ENCODE measurements at regions of chr4 and their contacts with region 1.

Region 1: GRCh38 chr4:6951880-6952419 is 42.3 kb downstream of the TBC1D14 start:
- DNase-seq: peak in 1 of 5 donors; percentile 21
- H3K4me3 ChIP-seq: no peak overlapping the region
- H3K27ac ChIP-seq: no peak overlapping the region
- H3K4me1 ChIP-seq: peaks cover 3% of the 10 kb centered on the region
- H3K27me3 ChIP-seq: no peaks in the 10 kb centered on the region
- CTCF ChIP-seq: no peak
- EP300 ChIP-seq: no peak
- POLR2A ChIP-seq: no peak

Region 2: DNA sequence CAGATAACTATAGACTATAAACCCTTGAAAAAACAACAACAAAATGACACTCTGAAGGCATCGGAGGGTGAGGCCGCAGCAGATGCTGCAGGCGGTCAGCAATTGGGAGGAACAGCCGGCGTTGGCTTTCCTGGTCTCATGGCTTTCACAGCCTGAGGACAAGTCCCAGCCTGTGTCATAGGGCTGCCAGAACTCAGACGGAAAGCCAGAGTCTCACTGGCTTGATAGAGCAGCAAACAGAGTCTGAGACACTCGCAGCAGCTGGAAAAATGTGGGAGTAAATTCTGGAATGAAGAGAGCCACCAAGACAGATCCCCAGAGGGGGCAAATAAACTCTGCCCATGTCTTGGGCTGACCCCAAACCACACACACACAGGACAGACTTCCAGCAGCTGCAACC is 565.9 kb before region 1 on chr4:
- intact Hi-C with region 1: no loop called
- DNase-seq: peak in 1 of 5 donors; percentile 19
- H3K4me3 ChIP-seq: no peak overlapping the region
- H3K27ac ChIP-seq: no peak overlapping the region
- H3K4me1 ChIP-seq: peaks cover 2% of the 10 kb centered on the region
- H3K27me3 ChIP-seq: no peaks in the 10 kb centered on the region
- CTCF ChIP-seq: no peak
- EP300 ChIP-seq: no peak
- POLR2A ChIP-seq: no peak

Region 3: DNA sequence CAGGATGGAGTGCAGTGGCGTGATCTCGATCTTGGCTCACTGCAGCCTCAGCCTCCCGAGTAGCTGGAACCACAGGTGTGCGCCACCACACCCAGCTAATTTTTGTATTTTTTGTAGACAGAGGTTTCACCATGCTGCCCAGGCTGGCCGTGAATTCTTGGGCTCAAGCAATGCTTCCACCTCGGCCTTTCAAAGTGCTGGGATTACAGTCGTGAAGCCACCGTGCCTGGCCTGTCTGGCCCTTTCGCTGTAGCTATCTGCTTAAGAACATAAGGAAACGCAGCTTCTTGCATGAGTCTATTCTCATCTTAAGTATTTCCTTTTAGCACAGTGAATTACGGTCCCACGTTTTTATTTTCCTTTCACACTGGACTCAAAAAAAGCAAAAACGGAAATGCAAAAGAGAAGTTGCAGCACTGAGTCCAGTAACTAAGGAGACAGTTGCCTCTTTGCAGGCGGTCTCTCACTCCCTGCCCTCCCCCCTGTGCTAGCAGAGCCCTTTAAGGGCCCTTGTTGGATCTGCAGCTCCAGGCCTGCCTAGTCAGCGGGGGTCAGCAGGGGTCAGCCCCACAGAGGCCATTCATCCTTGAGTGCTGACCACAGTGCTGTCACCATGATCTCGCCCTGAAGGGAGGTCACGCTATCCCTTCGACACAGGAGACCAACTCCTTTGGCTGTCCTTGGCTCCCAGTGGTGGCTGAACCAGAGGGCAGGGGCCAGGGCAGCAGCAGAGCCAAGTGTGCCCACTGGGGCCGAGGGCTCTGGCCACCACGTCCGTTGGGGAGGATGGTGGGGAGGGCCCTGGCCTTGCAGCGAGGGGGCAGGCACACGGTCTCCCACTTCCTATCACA is 64.1 kb before region 1 on chr4:
- intact Hi-C with region 1: loop called in 1 of 4 experiments (anchors 2 kb)
- DNase-seq: peak in 1 of 5 donors; percentile 17
- H3K4me3 ChIP-seq: no peak overlapping the region
- H3K27ac ChIP-seq: no peak overlapping the region
- H3K4me1 ChIP-seq: no peaks in the 10 kb centered on the region
- H3K27me3 ChIP-seq: no peaks in the 10 kb centered on the region
- CTCF ChIP-seq: no peak
- EP300 ChIP-seq: no peak
- POLR2A ChIP-seq: no peak

Measured in ovary (tissue), 10 donors.